CD4-positive, alpha-beta memory T cell (primary cell): ENCODE measurements at regions of chr3 and their contacts with region 1.

Region 1: DNA sequence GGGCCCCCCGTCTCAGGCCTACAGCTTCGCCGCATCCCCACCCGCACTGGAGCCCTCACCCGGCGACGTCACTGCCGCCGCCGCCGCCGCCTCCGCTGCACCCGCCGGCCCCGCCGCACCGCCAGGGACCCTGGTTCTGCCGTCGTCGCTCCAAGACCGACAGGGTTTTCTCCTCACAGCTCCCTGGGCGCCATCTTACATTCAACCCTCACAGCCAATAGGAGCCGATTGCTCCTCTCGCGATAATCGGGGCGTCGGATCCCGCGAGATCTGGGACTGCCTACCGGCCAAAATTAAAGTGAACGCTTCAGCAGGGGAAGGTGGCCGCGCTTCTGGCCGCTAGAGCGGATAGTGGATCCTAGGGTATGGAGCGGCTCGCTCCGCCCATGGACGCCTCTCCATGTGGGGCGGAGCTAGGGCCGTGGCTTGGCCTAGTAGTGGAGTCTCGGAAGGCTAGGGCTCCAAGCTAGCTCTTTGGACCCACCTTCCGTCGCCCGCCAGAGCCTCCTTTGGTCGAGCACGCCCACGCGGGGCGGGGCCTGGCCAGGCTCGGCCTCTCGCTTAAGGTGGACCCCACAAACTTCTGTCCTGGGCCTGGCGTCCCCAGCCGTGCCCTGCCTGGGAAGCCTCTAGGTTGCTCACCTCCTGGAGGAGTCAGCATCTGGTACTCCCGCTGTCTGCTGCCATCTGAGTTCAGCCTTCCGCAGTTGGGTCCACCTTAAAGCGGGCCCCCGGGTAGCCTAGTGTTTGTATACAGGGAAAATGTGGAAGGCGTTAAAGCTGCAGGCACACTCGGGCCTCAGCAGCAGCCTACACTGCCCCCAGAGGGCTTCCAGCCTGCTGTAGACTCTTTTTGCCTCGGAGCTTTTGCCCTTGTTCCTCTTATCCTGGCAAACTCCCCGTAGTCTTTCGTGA is at the start of gene QRICH1:
- DNase-seq: peak; percentile 97 to 99 (median 98)
- H3K4me3 ChIP-seq: peak within 1 kb of the TSS; percentile 84 to 90
- H3K4me3 Mint-ChIP-seq: peak within 1 kb of the TSS; percentile 92 to 96 (median 96)
- H3K27ac ChIP-seq: peak within 1 kb of the TSS; percentile 87
- H3K27ac Mint-ChIP-seq: peak within 1 kb of the TSS; percentile 94 to 99 (median 97)
- H3K4me1 ChIP-seq: peaks cover 46% of the 10 kb centered on the region
- H3K4me1 Mint-ChIP-seq: peaks cover 21 to 49% (median 35%) of the 10 kb centered on the region in 4 donors
- H3K27me3 ChIP-seq: no peaks in the 10 kb centered on the region
- H3K27me3 Mint-ChIP-seq: no peaks in the 10 kb centered on the region
- total RNA-seq, gene QRICH1: 172 to 177 TPM

Region 2: DNA sequence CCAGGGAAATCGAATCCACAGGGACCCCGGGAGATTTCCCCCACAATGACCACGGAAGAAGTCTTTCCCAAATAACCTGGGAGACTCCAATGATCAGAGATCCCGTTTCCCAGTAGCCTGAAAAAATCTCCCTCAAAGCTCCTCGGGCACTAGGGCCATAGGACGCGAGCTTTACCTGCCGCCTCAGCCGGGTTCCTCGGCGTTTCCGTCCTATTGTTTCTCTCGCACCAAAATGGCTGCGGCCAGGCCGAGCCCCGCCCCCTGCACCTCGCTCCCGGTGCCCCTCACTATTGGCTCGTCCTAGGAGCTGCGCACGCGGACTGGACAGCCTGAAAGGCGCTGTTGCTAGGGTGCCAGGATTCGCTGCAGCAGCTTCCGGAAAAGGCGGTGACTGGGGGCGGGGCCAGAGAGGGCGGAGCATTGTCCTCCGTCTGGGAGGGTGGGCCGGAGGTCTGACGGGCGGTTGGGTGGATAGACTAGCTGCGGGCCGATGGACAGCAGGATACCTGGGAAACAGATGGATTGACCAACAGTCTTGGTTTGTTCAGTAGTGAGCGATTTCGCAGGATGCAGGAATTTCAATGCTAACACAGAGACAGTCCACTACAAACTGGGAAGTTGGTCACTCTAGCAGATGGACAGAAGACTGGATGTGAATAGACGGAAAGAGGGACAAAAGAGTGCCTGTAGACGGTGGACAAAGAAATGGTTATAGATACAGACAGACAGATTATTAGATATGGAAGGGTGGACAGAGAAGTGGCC is 376.9 kb before region 1 on chr3 and contains the start of gene IP6K2:
- CTCF ChIA-PET with region 1: no interaction called
- POLR2A ChIA-PET with region 1: interaction called, 15 read pairs
- intact Hi-C with region 1: loop called (anchors 1 kb)
- DNase-seq: peak; percentile 95 to 99 (median 97)
- H3K4me3 ChIP-seq: peak within 1 kb of the TSS; percentile 90 to 98
- H3K4me3 Mint-ChIP-seq: peak within 1 kb of the TSS; percentile 98 to 100 (median 99)
- H3K27ac ChIP-seq: peak within 1 kb of the TSS; percentile 91
- H3K27ac Mint-ChIP-seq: peak within 1 kb of the TSS; percentile 88 to 99 (median 99)
- H3K4me1 ChIP-seq: peaks cover 44% of the 10 kb centered on the region
- H3K4me1 Mint-ChIP-seq: peaks cover 28 to 51% (median 37%) of the 10 kb centered on the region in 4 donors
- H3K27me3 ChIP-seq: no peaks in the 10 kb centered on the region
- H3K27me3 Mint-ChIP-seq: no peaks in the 10 kb centered on the region
- total RNA-seq, gene IP6K2: 84.5 to 91.8 TPM

Region 3: DNA sequence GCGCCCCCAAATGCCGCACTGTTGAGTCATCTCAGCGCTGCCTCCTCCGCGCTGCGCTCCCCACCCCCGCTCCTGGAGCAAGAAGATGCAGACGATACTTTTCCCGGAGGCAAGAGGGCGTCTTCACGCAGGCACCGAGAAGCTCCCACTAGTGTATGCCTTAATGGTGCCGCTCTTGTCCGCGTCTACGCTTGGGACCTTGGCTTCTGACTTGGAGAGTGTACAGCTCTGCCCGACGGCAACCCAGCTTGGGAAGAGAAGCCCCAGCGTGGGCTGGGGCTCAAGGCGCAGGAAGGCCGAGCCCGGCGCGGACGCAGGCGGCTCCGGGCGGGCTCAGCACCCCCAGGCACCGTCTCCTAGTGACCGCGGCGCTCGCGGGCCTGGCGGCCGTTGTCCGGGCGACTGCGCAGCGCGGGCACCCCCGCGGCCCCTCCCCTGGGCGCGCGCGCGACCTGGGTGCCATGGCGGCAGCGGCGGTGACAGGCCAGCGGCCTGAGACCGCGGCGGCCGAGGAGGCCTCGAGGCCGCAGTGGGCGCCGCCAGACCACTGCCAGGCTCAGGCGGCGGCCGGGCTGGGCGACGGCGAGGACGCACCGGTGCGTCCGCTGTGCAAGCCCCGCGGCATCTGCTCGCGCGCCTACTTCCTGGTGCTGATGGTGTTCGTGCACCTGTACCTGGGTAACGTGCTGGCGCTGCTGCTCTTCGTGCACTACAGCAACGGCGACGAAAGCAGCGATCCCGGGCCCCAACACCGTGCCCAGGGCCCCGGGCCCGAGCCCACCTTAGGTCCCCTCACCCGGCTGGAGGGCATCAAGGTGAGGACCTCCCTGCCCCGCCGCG is 104.1 kb before region 1 on chr3 and contains the start of gene P4HTM:
- CTCF ChIA-PET with region 1: interaction called, 38 read pairs
- POLR2A ChIA-PET with region 1: interaction called, 20 read pairs
- intact Hi-C with region 1: loop called (anchors 1 kb)
- DNase-seq: peak; percentile 46 to 84 (median 54)
- H3K4me3 ChIP-seq: peak within 1 kb of the TSS; percentile 76 to 86
- H3K4me3 Mint-ChIP-seq: peak within 1 kb of the TSS; percentile 94 to 97 (median 94)
- H3K27ac ChIP-seq: peak within 1 kb of the TSS; percentile 65
- H3K27ac Mint-ChIP-seq: peak within 1 kb of the TSS; percentile 90 to 96 (median 93)
- H3K4me1 ChIP-seq: peaks cover 45% of the 10 kb centered on the region
- H3K4me1 Mint-ChIP-seq: peaks cover 30 to 57% (median 43%) of the 10 kb centered on the region in 4 donors
- H3K27me3 ChIP-seq: no peaks in the 10 kb centered on the region
- H3K27me3 Mint-ChIP-seq: no peaks in the 10 kb centered on the region
- total RNA-seq, gene P4HTM: 79.3 to 87.3 TPM

Region 4: GRCh38 chr3:49028673-49029562 is 65.2 kb before region 1 on chr3 and contains the start of gene IMPDH2:
- CTCF ChIA-PET with region 1: interaction called, 6 read pairs
- POLR2A ChIA-PET with region 1: interaction called, 40 read pairs
- intact Hi-C with region 1: loop called (anchors 2 kb)
- DNase-seq: peak; percentile 91 to 93 (median 93)
- H3K4me3 ChIP-seq: peak within 1 kb of the TSS; percentile 64 to 77
- H3K4me3 Mint-ChIP-seq: peak within 1 kb of the TSS; percentile 90 to 97 (median 92)
- H3K27ac ChIP-seq: peak within 1 kb of the TSS; percentile 93
- H3K27ac Mint-ChIP-seq: peak within 1 kb of the TSS; percentile 94 to 100 (median 99)
- H3K4me1 ChIP-seq: peaks cover 21% of the 10 kb centered on the region
- H3K4me1 Mint-ChIP-seq: peaks cover 17 to 52% (median 24%) of the 10 kb centered on the region in 4 donors
- H3K27me3 ChIP-seq: no peaks in the 10 kb centered on the region
- H3K27me3 Mint-ChIP-seq: no peaks in the 10 kb centered on the region
- total RNA-seq, gene IMPDH2: 87.5 to 89.6 TPM

Region 5: DNA sequence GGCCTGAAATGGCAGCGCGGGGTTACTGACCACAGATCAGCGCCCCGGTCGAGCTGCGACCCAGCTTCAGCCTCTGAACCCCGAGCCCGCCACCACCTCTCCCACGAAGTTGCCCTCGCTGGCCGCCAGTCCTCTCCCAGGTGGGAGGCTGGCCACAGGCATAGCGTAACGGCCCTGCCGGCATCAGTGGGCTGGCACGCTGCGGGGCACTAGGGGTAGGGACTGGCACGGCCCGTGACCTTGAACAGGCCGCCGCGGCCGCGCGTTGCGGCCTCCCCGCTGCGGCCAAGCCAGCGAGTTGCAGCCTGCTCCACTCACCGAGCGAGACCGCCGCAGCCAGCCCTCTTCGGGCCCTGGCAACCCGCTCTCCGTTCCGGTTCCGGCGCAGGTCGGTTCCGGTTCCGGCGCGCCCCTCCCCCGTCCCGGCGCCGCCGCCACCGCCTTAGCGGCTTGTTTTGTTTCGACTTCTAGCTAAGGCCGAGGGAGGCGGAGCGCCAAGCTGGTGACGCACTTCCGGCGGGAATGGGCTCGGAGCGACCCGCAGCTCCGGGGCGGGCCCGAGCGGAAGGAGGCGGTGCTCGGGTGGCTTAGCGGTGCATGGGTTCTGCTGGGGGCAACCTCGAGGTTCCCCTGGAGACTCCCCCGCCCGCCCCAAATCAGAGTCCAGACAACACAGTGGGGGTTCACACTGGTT is 26.5 kb after region 1 on chr3 and contains the start of gene USP19:
- CTCF ChIA-PET with region 1: interaction called, 24 read pairs
- POLR2A ChIA-PET with region 1: interaction called, 105 read pairs
- intact Hi-C with region 1: loop called (anchors 1 kb)
- DNase-seq: peak; percentile 94 to 95 (median 95)
- H3K4me3 ChIP-seq: peak within 1 kb of the TSS; percentile 45 to 94
- H3K4me3 Mint-ChIP-seq: peak within 1 kb of the TSS; percentile 86 to 90 (median 89)
- H3K27ac ChIP-seq: peak within 1 kb of the TSS; percentile 92
- H3K27ac Mint-ChIP-seq: peak within 1 kb of the TSS; percentile 88 to 95 (median 92)
- H3K4me1 ChIP-seq: peaks cover 26% of the 10 kb centered on the region
- H3K4me1 Mint-ChIP-seq: peaks cover 7 to 35% (median 19%) of the 10 kb centered on the region in 4 donors
- H3K27me3 ChIP-seq: no peaks in the 10 kb centered on the region
- H3K27me3 Mint-ChIP-seq: no peaks in the 10 kb centered on the region
- total RNA-seq, gene USP19: 91.7 to 105 TPM

Region 6: DNA sequence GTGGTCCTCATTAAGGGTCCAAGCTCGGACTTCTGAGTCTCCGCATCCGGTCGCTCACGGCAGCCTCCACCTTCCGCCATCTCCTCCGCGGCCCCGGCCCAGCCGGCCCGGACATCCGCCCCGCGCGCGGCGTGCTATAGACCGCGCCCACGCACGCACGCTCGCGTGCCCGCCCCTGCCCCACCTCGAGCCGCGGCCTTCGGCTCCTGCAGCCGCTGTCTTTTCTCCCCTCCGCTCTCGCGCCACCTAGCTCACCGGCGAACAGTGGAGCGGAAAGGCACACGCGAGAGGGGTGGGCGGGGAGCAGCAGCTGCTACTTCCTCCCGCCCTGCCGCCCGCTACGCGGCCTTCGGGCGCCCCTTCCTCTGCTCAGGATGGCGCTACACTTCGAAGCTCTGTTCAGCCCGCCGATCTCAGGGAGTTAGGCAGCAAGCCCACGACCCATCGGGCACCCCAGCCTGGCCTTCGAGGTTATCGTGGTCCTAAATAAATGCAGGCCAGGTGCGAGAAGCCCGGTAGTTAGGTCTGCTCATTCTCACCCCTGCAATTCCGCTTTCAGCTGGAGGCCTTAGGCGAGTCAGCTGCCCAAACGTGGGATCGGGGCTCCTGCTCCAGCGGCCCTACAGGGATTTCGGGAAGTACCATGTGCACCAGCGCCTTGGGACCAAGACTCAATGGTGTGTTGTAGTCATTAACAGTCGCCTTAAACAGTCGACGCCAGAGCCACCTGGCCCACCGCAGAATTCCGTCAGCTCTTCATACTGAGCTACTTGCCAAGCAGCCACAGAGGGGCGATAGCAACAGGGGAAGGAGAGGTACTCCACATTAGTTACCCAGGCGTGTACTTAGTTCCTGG is 246.1 kb after region 1 on chr3 and contains the start of gene USP4:
- CTCF ChIA-PET with region 1: interaction called, 3 read pairs
- POLR2A ChIA-PET with region 1: interaction called, 20 read pairs
- intact Hi-C with region 1: no loop called
- DNase-seq: peak; percentile 91 to 93 (median 91)
- H3K4me3 ChIP-seq: peak within 1 kb of the TSS; percentile 63 to 81
- H3K4me3 Mint-ChIP-seq: peak within 1 kb of the TSS; percentile 91 to 97 (median 94)
- H3K27ac ChIP-seq: peak within 1 kb of the TSS; percentile 92
- H3K27ac Mint-ChIP-seq: peak within 1 kb of the TSS; percentile 96 to 100 (median 98)
- H3K4me1 ChIP-seq: peaks cover 56% of the 10 kb centered on the region
- H3K4me1 Mint-ChIP-seq: peaks cover 27 to 51% (median 41%) of the 10 kb centered on the region in 4 donors
- H3K27me3 ChIP-seq: no peaks in the 10 kb centered on the region
- H3K27me3 Mint-ChIP-seq: no peaks in the 10 kb centered on the region
- total RNA-seq, gene USP4: 111 to 114 TPM